ENCODE measurements at regions of chr1 and their contacts with region 1.

Region 1: GRCh38 chr1:196148367-196148970 is 459.8 kb downstream of the KCNT2 start:
- DNase-seq: peak; percentile 63
- H3K4me3 ChIP-seq: no peak overlapping the region
- H3K27ac ChIP-seq: no peak overlapping the region
- H3K4me1 ChIP-seq: no peaks in the 10 kb centered on the region
- H3K27me3 ChIP-seq: no peaks in the 10 kb centered on the region
- CTCF ChIP-seq: peak; percentile 17 to 31
- POLR2A ChIP-seq: no peak

Region 2: GRCh38 chr1:196131691-196132090 is 16.8 kb before region 1 on chr1:
- CTCF ChIA-PET with region 1: interaction called, 14 read pairs
- POLR2A ChIA-PET with region 1: no interaction called
- dilution Hi-C with region 1: no loop called
- intact Hi-C with region 1: no loop called
- DNase-seq: no peak
- H3K4me3 ChIP-seq: no peak overlapping the region
- H3K27ac ChIP-seq: no peak overlapping the region
- H3K4me1 ChIP-seq: no peaks in the 10 kb centered on the region
- H3K27me3 ChIP-seq: no peaks in the 10 kb centered on the region
- CTCF ChIP-seq: no peak
- POLR2A ChIP-seq: no peak

Region 3: GRCh38 chr1:196180847-196181593 is 32.6 kb after region 1 on chr1:
- CTCF ChIA-PET with region 1: interaction called, 17 read pairs
- POLR2A ChIA-PET with region 1: no interaction called
- dilution Hi-C with region 1: no loop called
- intact Hi-C with region 1: no loop called
- DNase-seq: peak; percentile 94
- H3K4me3 ChIP-seq: no peak overlapping the region
- H3K27ac ChIP-seq: peak overlapping the region; percentile 70
- H3K4me1 ChIP-seq: peaks cover 15% of the 10 kb centered on the region
- H3K27me3 ChIP-seq: no peaks in the 10 kb centered on the region
- CTCF ChIP-seq: no peak
- POLR2A ChIP-seq: no peak

Region 4: GRCh38 chr1:196309386-196309785 is 160.9 kb after region 1 on chr1:
- CTCF ChIA-PET with region 1: interaction called, 377 read pairs
- POLR2A ChIA-PET with region 1: no interaction called
- dilution Hi-C with region 1: no loop called
- intact Hi-C with region 1: loop called (anchors 1 kb)
- DNase-seq: peak; percentile 49
- H3K4me3 ChIP-seq: no peak overlapping the region
- H3K27ac ChIP-seq: no peak overlapping the region
- H3K4me1 ChIP-seq: no peaks in the 10 kb centered on the region
- H3K27me3 ChIP-seq: no peaks in the 10 kb centered on the region
- CTCF ChIP-seq: no peak
- POLR2A ChIP-seq: no peak

Region 5: DNA sequence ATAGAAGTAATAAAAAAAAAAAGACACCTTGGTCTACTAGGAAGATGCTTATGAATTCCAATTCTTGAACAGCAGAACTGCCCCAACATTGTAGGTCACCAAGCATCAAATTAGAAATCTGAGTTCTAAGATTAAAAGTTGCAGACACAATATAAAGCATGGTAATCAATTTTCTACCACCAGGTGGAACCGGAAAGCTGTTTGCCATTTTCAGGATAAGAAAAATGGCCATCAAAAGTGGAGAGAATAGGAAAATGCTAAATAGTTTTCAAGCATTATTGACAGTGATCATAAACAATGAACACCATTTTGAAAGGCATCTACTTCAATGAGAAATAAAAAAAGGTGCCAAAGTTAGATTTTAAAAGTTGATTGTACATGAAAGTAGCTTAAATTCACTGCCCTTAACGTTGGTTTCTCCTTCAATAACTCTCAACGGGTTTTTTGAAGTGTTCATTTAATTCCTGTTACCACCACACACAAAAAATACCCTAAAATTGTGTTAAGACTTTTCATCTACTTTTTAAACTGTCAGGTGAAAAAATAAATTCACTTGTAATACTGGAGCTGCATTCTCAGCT is 206.8 kb after region 1 on chr1:
- CTCF ChIA-PET with region 1: interaction called, 26 read pairs
- POLR2A ChIA-PET with region 1: no interaction called
- dilution Hi-C with region 1: no loop called
- intact Hi-C with region 1: no loop called
- DNase-seq: peak; percentile 64
- H3K4me3 ChIP-seq: no peak overlapping the region
- H3K27ac ChIP-seq: no peak overlapping the region
- H3K4me1 ChIP-seq: no peaks in the 10 kb centered on the region
- H3K27me3 ChIP-seq: no peaks in the 10 kb centered on the region
- CTCF ChIP-seq: peak; percentile 28 to 38
- POLR2A ChIP-seq: no peak

Region 6: DNA sequence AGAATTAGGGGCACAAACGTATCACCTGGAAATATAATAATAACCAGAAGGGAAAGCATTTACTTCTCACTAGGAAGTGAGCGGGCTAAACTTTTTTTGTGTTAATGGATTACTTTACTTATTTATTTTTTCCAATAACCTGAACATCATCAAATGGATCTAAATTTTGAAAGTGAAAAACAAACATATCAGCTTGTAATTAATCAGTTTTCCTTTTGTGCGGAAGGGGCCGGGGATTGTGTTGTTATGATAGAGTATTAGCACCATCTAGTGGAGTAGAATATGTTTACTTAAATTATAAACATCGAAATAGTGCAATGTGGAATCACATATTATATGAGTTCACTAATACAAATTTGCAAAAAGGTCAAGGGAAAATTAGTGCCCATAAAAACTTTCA is 512.4 kb after region 1 on chr1:
- CTCF ChIA-PET with region 1: interaction called, 86 read pairs
- POLR2A ChIA-PET with region 1: no interaction called
- dilution Hi-C with region 1: no loop called
- intact Hi-C with region 1: loop called (anchors 1 kb)
- DNase-seq: peak; percentile 53
- H3K4me3 ChIP-seq: peak overlapping the region in 1 of 3 experiments; percentile 52
- H3K27ac ChIP-seq: no peak overlapping the region
- H3K4me1 ChIP-seq: no peaks in the 10 kb centered on the region
- H3K27me3 ChIP-seq: no peaks in the 10 kb centered on the region
- CTCF ChIP-seq: peak in 1 of 2 donors; percentile 4
- POLR2A ChIP-seq: no peak

Measured in endothelial cell of umbilical vein (primary cell).